ENCODE measurements at regions of chr11 and their contacts with region 1.

Region 1: DNA sequence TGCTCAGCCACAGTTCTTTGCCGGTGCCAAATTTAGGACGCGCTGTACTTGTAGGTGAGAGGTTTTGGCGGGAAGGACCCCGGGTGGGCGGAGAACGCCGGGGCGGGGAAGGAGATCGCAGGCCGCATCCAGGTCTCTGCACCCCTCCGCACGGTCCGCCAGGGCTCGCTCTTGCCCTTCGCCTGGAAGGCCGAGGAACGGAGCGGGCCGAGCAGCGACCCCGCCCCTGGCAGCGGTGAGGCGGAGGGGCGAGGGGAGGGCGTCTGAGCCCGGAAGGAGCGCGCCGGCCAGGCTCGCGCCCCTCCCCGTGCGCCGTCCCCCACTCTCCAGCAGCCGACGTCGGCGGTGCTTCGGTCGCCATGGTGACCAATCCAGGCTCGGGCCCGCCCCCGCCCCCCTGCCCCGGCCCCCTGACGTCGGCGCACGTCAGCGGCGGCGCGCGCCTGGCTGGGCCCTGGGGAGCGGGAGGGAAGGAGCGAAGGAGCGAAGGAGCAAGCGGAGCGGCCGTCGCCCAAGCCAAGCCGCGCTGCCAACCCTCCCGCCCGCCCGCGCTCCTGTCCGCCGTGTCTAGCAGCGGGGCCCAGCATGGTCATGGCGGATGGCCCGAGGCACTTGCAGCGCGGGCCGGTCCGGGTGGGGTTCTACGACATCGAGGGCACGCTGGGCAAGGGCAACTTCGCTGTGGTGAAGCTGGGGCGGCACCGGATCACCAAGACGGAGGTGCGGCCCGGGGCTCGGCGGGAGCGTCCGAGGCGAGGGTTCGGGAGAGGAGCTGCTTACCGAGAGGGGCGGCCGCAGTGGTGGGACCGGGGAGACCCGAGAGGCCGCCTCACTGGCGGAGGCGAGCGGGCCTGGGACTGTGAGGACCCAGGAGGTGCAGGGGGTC is at the start of gene SIK2:
- DNase-seq: peak; percentile 59
- H3K4me3 ChIP-seq: peak within 1 kb of the TSS; percentile 99
- H3K27me3 ChIP-seq: no peaks in the 10 kb centered on the region
- CTCF ChIP-seq: peak; percentile 92
- polyA plus RNA-seq, gene SIK2: 17.6 and 24.2 TPM in 2 replicates

Region 2: GRCh38 chr11:111565114-111565720 is 37.0 kb before region 1 on chr11:
- CTCF ChIA-PET with region 1: interaction called, 10 read pairs
- POLR2A ChIA-PET with region 1: no interaction called
- DNase-seq: no peak
- H3K4me3 ChIP-seq: no peak overlapping the region
- H3K27me3 ChIP-seq: no peaks in the 10 kb centered on the region
- CTCF ChIP-seq: peak; percentile 84

Region 3: GRCh38 chr11:111612224-111612623 is 10.0 kb after region 1 on chr11:
- CTCF ChIA-PET with region 1: interaction called, 12 read pairs
- POLR2A ChIA-PET with region 1: no interaction called
- DNase-seq: no peak
- H3K4me3 ChIP-seq: no peak overlapping the region
- H3K27me3 ChIP-seq: no peaks in the 10 kb centered on the region
- CTCF ChIP-seq: no peak

Region 4: GRCh38 chr11:111777094-111778046 is 175.1 kb after region 1 on chr11:
- CTCF ChIA-PET with region 1: interaction called, 41 read pairs
- POLR2A ChIA-PET with region 1: no interaction called
- DNase-seq: no peak
- H3K4me3 ChIP-seq: no peak overlapping the region
- H3K27me3 ChIP-seq: no peaks in the 10 kb centered on the region
- CTCF ChIP-seq: peak; percentile 74

Region 5: DNA sequence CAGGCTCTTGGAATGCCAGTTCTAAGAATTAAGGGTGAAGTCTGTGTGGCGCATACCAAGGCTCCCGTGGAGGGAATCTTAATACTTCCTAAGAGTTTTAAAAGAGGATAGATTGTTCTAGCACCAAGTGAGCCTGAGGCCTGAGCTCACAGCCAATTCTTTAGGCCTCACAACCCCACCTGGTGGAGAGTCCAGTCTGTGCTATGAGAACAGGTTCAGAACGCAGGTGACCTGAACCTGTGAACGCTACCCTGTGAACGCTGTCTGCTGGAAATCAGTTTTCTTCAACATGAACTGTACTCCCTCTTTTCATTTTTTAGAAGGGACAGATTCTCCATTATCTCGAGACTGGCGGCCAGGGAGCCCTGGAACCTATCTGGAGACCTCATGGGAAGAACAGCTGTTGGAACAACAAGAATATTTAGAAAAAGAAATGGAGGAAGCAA is 379.8 kb after region 1 on chr11:
- CTCF ChIA-PET with region 1: no interaction called
- POLR2A ChIA-PET with region 1: interaction called, 30 read pairs
- DNase-seq: no peak
- H3K4me3 ChIP-seq: no peak overlapping the region
- H3K27me3 ChIP-seq: no peaks in the 10 kb centered on the region
- CTCF ChIP-seq: peak; percentile 64

Measured in BJ (cell line).